Activated CD8-positive, alpha-beta memory T cell treated with anti-CD3 and anti-CD28 coated beads, Interleukin-2, amount 10 ng/mL, durations not matched to agents 7 days and 5 days (primary cell): ENCODE measurements at regions of chr17 and their contacts with region 1.

Region 1: DNA sequence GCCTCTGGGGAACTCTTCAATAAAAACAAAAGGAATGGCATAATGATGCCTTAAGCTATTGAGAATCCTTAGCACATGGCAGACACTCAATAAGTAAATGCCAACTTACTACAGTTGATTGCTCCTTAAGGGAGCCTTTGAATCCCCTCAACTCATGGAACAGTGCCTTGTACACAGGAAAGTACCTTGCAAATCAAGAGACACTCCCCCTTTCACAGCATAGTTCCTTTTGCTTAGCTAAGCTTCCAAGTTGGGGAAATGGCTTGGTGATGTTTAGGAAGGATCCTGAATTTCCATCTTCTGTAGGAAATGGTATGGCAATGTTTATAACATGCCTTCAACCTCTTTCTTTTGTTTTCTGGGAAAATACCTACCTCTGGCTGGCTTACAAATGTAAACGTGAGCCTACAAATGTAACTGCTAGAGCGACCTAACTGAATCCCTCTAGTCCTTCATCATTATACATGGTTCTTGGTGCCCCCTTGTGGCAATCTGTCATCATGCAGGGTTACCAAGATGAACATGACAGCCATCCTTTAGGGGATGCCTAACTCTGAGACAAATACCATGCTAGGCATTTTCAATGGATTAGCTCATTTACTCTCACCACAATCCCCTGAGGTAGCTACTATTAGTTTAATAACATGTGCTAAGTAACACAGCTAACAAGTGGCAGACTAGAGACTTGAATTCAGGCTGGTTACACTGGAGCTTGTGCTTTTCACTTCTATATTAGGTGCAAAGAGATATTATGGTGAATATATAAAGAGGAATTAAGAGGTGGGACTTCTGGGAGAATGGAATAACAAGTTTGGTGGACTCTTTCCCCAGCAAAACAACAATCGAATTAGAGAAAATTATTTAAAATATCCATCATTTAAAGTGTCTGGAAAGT is 65.0 kb downstream of the MMD start:
- DNase-seq: peak; percentile 84
- ATAC-seq: peak; percentile 92
- H3K4me3 Mint-ChIP-seq: no peak overlapping the region
- H3K27ac Mint-ChIP-seq: no peak overlapping the region
- H3K4me1 Mint-ChIP-seq: peaks cover 4% of the 10 kb centered on the region
- H3K27me3 Mint-ChIP-seq: peaks cover 20% of the 10 kb centered on the region

Region 2: GRCh38 chr17:55005520-55005919 is 351.2 kb before region 1 on chr17:
- CTCF ChIA-PET with region 1: interaction called, 10 read pairs
- DNase-seq: no peak
- ATAC-seq: no peak
- H3K4me3 Mint-ChIP-seq: no peak overlapping the region
- H3K27ac Mint-ChIP-seq: no peak overlapping the region
- H3K4me1 Mint-ChIP-seq: peaks cover 2% of the 10 kb centered on the region
- H3K27me3 Mint-ChIP-seq: no peaks in the 10 kb centered on the region